HAP-1 (cell line): ENCODE measurements at regions of chr4 and their contacts with region 1.

Region 1: DNA sequence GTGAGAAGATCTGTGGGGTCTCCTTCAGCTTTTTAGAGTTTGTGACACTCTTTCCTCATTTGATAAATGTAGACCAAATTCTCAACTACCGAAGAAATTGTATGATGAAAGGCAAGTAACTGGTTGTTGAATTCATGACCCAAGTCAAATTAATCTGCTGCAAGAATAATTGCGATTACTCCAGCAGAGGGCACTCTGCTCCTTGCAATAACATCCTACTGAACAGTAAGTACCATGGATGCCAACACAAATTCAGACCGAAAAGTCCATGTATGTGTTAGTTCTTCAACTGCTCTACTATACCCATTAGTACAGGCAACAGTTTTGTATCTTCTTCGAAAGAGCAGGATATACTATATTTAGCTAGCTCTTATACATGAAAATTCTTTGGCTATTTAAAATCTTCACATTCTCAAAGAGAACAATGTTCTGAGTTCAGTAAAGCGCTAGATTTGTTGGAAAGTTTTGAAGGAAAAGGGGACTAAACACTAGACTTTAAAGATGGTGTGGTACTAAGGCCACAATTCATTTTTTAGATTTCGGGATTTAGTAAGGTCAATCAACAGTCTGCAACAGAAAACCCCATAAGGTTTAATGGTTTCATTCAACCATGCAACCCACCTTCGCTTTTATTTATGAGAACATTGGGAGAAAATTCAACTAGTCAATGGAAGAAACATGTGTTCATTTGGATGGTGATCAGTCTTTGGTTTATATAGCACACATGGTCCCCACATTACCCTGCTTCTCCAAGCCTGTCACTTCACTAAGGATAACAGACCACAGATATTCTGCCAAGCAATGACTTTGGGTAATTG is 105.4 kb upstream of the TBC1D9 start:
- DNase-seq: peak; percentile 75 to 79
- H3K4me3 ChIP-seq: no peak overlapping the region
- H3K4me1 ChIP-seq: peaks cover 4% of the 10 kb centered on the region; the same call in 1 of the 2 replicates
- H3K27me3 ChIP-seq: no peaks in the 10 kb centered on the region

Region 2: GRCh38 chr4:141133146-141133998 is 271.8 kb after region 1 on chr4 and contains the start of gene RNF150:
- in situ Hi-C with region 1: loop called (anchors 5 kb)
- DNase-seq: peak; percentile 91 to 92
- H3K4me3 ChIP-seq: peak within 1 kb of the TSS; percentile 76
- H3K4me1 ChIP-seq: peaks cover 13% of the 10 kb centered on the region
- H3K27me3 ChIP-seq: peaks cover 19% of the 10 kb centered on the region